ENCODE measurements at regions of chr4 and their contacts with region 1.

Region 1: GRCh38 chr4:168560184-168560827 is 63.5 kb downstream of the PALLD start:
- DNase-seq: no peak
- ATAC-seq: peak; percentile 31; the same call in 1 of the 2 replicates
- H3K4me3 ChIP-seq: 0 out of 4 replicates have a peak overlapping the region, but pooled peaks of 1 of the 2 experiments have one; percentile 8
- H3K27ac ChIP-seq: peak overlapping the region; percentile 86
- H3K4me1 ChIP-seq: peaks cover 79 to 92% of the 10 kb centered on the region in 2 experiments
- H3K27me3 ChIP-seq: no peaks in the 10 kb centered on the region
- CTCF ChIP-seq: no peak
- POLR2A ChIP-seq: no peak
- RAD21 ChIP-seq: no peak

Region 2: DNA sequence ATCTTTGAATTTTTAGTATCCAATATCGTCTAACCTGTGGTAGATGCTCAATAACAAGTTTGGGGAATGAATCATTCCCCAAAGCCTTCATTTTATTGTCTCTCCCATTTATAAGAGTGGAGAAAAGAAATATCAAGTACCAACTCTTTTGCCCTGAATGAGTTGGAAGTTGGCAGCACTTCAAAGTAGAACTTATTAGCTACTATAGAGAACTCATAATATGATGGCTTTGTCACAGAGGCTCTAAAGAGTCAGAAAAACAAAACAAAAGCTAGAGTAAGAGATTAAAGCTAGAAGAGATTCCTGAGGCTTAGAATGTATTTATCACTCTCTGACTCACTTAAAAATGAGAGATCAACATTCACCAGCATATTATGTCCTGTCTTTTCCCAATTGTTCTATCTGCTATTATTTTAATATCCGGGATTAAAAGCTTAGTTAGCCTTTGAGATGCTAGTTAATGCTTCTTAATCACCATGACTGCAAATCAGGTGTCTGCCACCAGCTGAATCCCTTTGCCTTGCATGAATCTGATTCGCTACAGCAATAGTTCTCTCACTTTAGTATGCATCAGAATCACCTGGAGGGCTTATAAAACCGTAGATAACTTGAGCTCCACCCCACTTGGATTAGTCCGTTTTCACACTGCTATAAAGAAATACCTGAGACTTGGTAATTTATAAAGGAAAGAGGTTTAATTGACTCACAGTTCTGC is 14.4 kb after region 1 on chr4:
- CTCF ChIA-PET with region 1: no interaction called
- POLR2A ChIA-PET with region 1: interaction called, 14 read pairs
- RAD21 ChIA-PET with region 1: interaction called in 1 of 2 experiments, 7 read pairs
- intact Hi-C with region 1: no loop called
- DNase-seq: peak; percentile 95
- ATAC-seq: peak; percentile 82
- H3K4me3 ChIP-seq: peak overlapping the region in 1 of 2 experiments; percentile 4; a peak in 1 of 4 replicates
- H3K27ac ChIP-seq: peak overlapping the region; percentile 97
- H3K4me1 ChIP-seq: peaks cover 54 to 66% of the 10 kb centered on the region in 2 experiments
- H3K27me3 ChIP-seq: no peaks in the 10 kb centered on the region
- CTCF ChIP-seq: no peak
- POLR2A ChIP-seq: no peak
- RAD21 ChIP-seq: peak; percentile 20; the same call in 1 of the 2 replicates